Transverse colon (tissue), 4 donors: ENCODE measurements at regions of chr5 and their contacts with region 1.

Region 1: GRCh38 chr5:170623576-170624181 is 119.9 kb downstream of the KCNIP1 start:
- DNase-seq: no peak
- H3K4me3 ChIP-seq: no peak overlapping the region
- H3K27ac ChIP-seq: no peak overlapping the region
- H3K4me1 ChIP-seq: no peaks in the 10 kb centered on the region
- H3K27me3 ChIP-seq: no peaks in the 10 kb centered on the region
- CTCF ChIP-seq: peak in 4 of 5 experiments; percentile 39 to 50 (median 46)
- EP300 ChIP-seq: no peak
- POLR2A ChIP-seq: no peak

Region 2: DNA sequence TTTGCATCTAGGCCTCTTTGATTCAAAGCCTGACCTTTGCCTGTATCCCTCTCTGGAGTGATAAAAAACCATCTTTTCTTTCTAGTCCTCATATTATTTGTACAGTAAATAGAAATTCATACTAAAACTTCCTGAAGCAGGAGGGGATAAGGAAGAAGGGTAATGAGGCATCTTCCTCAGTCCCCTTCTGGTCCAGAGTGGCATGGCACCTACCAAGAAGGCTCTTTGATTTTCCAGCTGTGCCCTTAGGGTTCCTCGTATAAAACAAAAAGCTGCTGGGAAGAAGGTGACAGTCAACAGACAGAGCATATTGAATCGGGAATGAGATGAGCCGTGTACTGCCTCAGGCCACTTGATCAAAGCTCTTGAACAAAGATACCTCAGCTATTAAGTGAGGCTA is 1112.0 kb before region 1 on chr5:
- in situ Hi-C with region 1: no loop called
- intact Hi-C with region 1: no loop called
- DNase-seq: no peak
- H3K4me3 ChIP-seq: no peak overlapping the region
- H3K27ac ChIP-seq: no peak overlapping the region
- H3K4me1 ChIP-seq: no peaks in the 10 kb centered on the region
- H3K27me3 ChIP-seq: no peaks in the 10 kb centered on the region
- CTCF ChIP-seq: no peak
- EP300 ChIP-seq: no peak
- POLR2A ChIP-seq: no peak

Region 3: DNA sequence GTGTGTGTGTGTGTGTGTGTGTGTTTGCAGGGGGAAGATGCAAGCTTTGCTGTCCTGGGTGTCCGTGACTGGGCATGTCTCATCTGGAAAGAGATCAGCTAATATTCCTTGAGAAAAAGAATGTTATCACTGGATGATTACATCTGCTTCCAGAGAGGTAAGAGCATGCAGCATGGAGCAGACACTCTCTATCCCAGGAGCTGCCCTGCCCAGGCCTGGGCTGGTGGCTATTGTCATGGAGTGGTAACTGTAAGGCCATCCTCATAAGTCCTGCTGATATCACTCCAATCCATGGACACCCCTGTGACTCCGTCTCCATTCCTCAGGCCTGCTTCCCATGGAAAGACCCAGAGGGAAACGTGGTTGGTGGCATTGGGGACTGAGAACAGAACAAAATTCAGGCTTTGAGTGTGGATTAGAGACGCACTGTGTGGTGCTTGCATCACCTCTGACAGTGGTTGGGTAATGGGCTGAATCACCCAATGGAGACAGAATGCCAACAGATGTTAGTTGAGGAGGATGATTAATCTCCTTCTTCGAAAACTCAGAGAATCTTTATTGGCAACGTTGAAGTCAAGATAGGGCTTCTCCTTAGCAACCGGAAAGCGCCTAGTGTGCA is 171.8 kb before region 1 on chr5:
- in situ Hi-C with region 1: loop called in 2 of 4 experiments (anchors 10 to 25 kb)
- intact Hi-C with region 1: no loop called
- DNase-seq: no peak
- H3K4me3 ChIP-seq: no peak overlapping the region
- H3K27ac ChIP-seq: no peak overlapping the region
- H3K4me1 ChIP-seq: no peaks in the 10 kb centered on the region
- H3K27me3 ChIP-seq: no peaks in the 10 kb centered on the region
- CTCF ChIP-seq: no peak
- EP300 ChIP-seq: no peak
- POLR2A ChIP-seq: no peak